Naive thymus-derived CD4-positive, alpha-beta T cell (primary cell): ENCODE measurements at regions of chr1 and their contacts with region 1.

Region 1: GRCh38 chr1:65067491-65068201 is 80.4 kb upstream of the AK4 start:
- DNase-seq: peak; percentile 48 to 75 (median 67)
- ATAC-seq: peak; percentile 39
- H3K4me3 ChIP-seq: peak overlapping the region; percentile 78
- H3K4me3 Mint-ChIP-seq: peak overlapping the region; percentile 85 to 99 (median 97)
- H3K27ac ChIP-seq: peak overlapping the region; percentile 90
- H3K27ac Mint-ChIP-seq: peak overlapping the region; percentile 93 to 100 (median 100)
- H3K4me1 ChIP-seq: peaks cover 16 to 24% of the 10 kb centered on the region in 2 donors
- H3K4me1 Mint-ChIP-seq: peaks cover 43 to 62% (median 55%) of the 10 kb centered on the region in 7 donors
- H3K27me3 ChIP-seq: no peaks in the 10 kb centered on the region
- H3K27me3 Mint-ChIP-seq: no peaks in the 10 kb centered on the region

Region 2: DNA sequence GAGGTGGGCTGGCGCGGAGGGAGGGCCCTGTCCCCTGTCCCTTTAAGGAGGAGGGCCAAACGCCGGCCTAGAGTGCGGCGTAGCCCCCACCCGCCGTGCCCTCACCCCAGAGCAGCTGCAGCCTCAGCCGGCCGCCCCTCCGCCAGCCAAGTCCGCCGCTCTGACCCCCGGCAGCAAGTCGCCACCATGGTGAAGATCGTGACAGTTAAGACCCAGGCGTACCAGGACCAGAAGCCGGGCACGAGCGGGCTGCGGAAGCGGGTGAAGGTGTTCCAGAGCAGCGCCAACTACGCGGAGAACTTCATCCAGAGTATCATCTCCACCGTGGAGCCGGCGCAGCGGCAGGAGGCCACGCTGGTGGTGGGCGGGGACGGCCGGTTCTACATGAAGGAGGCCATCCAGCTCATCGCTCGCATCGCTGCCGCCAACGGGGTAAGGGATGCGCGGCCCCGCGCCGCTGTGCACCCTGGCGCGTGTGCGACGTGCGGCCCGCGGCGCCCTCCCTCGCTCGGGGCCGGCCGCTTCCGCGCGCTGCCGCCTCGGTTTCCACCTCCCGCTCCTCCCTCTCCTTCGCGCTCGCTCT is 1474.3 kb before region 1 on chr1 and contains the start of gene PGM1:
- CTCF ChIA-PET with region 1: no interaction called
- POLR2A ChIA-PET with region 1: no interaction called
- intact Hi-C with region 1: loop called (anchors 5 to 10 kb)
- DNase-seq: peak; percentile 63 to 81 (median 76)
- ATAC-seq: peak; percentile 91
- H3K4me3 ChIP-seq: peak within 1 kb of the TSS; percentile 71
- H3K4me3 Mint-ChIP-seq: peak within 1 kb of the TSS; percentile 96 to 99 (median 98)
- H3K27ac ChIP-seq: peak within 1 kb of the TSS; percentile 90
- H3K27ac Mint-ChIP-seq: peak within 1 kb of the TSS; percentile 95 to 99 (median 99)
- H3K4me1 ChIP-seq: peaks cover 0 to 7% of the 10 kb centered on the region in 2 donors
- H3K4me1 Mint-ChIP-seq: peaks cover 21 to 49% (median 40%) of the 10 kb centered on the region in 7 donors
- H3K27me3 ChIP-seq: no peaks in the 10 kb centered on the region
- H3K27me3 Mint-ChIP-seq: no peaks in the 10 kb centered on the region
- total RNA-seq, gene PGM1: 11.9 to 57.2 (median 16.1) TPM

Region 3: GRCh38 chr1:64877151-64877550 is 190.5 kb before region 1 on chr1:
- CTCF ChIA-PET with region 1: interaction called, 3 read pairs
- POLR2A ChIA-PET with region 1: interaction called, 10 read pairs
- intact Hi-C with region 1: loop called (anchors 1 kb)
- DNase-seq: peak in 7 of 9 donors; percentile 75 to 90 (median 87)
- ATAC-seq: peak; percentile 96
- H3K4me3 ChIP-seq: peak overlapping the region; percentile 8
- H3K4me3 Mint-ChIP-seq: peak overlapping the region; percentile 70 to 83 (median 76)
- H3K27ac ChIP-seq: peak overlapping the region; percentile 36
- H3K27ac Mint-ChIP-seq: peak overlapping the region; percentile 41 to 95 (median 90)
- H3K4me1 ChIP-seq: peaks cover 43 to 53% of the 10 kb centered on the region in 2 donors
- H3K4me1 Mint-ChIP-seq: peaks cover 38 to 88% (median 84%) of the 10 kb centered on the region in 7 donors
- H3K27me3 ChIP-seq: no peaks in the 10 kb centered on the region
- H3K27me3 Mint-ChIP-seq: no peaks in the 10 kb centered on the region

Region 4: DNA sequence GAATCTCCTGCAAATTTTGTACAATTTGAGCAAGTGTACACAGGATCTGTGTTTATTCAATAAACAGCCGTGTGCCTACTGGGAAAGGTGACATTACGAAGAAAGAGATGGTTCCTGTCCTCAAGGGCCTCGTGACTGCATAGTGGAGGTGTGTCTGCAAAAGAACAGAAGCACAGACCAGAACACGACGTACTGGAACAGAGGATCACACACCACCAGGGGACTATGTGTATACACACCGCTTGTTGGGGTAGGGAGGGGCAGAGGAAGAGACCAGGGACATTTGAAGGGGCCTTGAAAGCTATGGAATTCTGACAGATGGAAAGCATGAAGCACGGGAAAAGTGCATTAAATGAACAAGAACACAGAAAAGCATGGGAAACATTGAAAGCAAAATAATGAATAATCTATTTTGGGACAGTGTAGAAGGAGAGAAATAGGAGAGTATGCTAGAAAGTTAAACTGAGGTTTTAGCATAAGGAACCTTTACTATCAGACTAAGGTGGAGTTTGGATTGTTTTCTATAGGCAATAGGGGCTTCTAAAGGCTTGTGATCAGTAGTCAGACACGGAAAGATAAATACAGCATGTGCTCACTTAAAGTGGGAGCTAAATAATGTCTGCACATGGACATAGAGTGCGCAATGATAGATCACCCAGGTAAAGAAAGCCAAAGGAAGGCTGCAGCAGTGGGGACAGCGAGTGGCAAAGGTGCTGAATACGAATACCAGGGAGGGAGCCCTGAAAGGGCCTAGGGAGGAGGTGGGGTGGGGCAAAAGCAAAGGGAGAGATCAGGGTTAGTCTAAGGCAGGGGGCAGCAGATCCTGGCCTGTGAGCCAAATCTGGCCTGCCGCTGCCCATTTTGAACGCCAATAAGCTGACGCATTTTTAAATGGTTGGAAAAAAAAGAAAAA is 112.3 kb before region 1 on chr1:
- CTCF ChIA-PET with region 1: no interaction called
- POLR2A ChIA-PET with region 1: no interaction called
- intact Hi-C with region 1: no loop called
- DNase-seq: peak in 1 of 9 donors; percentile 24
- ATAC-seq: peak; percentile 47
- H3K4me3 ChIP-seq: no peak overlapping the region
- H3K4me3 Mint-ChIP-seq: no peak overlapping the region
- H3K27ac ChIP-seq: no peak overlapping the region
- H3K27ac Mint-ChIP-seq: no peak overlapping the region
- H3K4me1 ChIP-seq: peaks cover 71 to 87% of the 10 kb centered on the region in 2 donors
- H3K4me1 Mint-ChIP-seq: peaks cover 12 to 56% (median 40%) of the 10 kb centered on the region in 7 donors
- H3K27me3 ChIP-seq: no peaks in the 10 kb centered on the region
- H3K27me3 Mint-ChIP-seq: no peaks in the 10 kb centered on the region

Region 5: DNA sequence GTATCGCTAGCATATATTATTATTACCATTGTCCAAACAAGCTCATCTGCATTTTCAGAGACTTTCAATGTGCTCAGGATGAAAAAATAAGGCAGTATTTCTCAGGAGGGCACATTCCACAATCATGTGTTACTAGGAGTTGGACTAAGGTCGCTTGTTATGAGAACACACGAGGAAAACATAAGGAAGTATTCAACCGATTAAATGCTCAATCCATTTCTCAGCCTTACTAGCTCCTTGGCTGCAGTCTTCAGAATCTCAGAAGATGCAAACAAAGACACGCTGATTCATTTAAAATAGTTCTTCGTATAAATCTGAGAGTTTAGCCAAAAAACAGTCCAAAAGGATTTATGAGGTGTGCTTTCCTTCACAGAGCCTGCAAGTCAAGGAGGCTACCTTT is 19.3 kb before region 1 on chr1:
- CTCF ChIA-PET with region 1: interaction called, 9 read pairs
- POLR2A ChIA-PET with region 1: interaction called, 57 read pairs
- intact Hi-C with region 1: no loop called
- DNase-seq: no peak
- ATAC-seq: no peak
- H3K4me3 ChIP-seq: no peak overlapping the region
- H3K4me3 Mint-ChIP-seq: peak overlapping the region in 2 of 10 donors; percentile 12 to 14
- H3K27ac ChIP-seq: no peak overlapping the region
- H3K27ac Mint-ChIP-seq: peak overlapping the region in 6 of 9 donors; percentile 27 to 91 (median 63)
- H3K4me1 ChIP-seq: peaks cover 22 to 36% of the 10 kb centered on the region in 2 donors
- H3K4me1 Mint-ChIP-seq: peaks cover 31 to 77% (median 67%) of the 10 kb centered on the region in 7 donors
- H3K27me3 ChIP-seq: no peaks in the 10 kb centered on the region
- H3K27me3 Mint-ChIP-seq: no peaks in the 10 kb centered on the region

Region 6: DNA sequence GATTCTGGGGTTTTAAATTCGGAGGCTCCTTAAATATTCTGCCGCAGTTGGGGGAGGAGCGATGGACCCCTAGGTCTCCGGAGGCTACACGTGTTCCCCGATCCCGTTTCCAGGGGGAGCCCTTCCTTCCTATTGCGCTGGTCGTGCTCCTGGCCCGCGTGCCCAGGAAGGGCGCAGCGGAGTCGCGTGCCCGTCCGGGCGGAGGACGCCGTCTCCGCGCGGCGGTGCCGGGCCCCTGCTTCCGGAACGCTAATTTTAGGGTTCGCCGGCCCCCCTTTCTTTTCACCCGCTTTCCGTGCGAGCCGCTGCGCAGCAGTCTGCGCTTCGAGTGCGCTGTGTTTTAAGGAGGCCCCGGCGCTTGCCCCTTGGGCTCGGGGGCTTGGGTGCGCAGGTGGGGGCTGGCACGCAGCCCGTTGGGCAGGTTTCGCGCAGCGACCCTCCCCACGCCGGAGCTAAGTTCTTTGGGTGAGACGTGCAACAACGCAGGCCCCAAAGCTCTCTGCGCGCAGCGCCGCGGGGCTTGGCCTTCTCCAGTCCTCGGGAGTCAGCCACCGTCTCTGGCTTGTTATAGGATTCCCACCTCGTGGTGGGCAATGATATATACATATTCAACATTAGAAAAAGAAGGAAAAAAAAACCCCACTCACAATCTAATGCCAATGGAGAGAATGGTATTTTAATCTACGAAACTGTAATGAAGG is 198.2 kb after region 1 on chr1:
- CTCF ChIA-PET with region 1: no interaction called
- POLR2A ChIA-PET with region 1: no interaction called
- intact Hi-C with region 1: loop called in 1 of 2 experiments (anchors 1 kb)
- DNase-seq: peak; percentile 21 to 60 (median 51)
- ATAC-seq: peak; percentile 76
- H3K4me3 ChIP-seq: peak overlapping the region; percentile 55
- H3K4me3 Mint-ChIP-seq: peak overlapping the region; percentile 51 to 89 (median 82)
- H3K27ac ChIP-seq: peak overlapping the region; percentile 24
- H3K27ac Mint-ChIP-seq: peak overlapping the region in 7 of 9 donors; percentile 49 to 79 (median 72)
- H3K4me1 ChIP-seq: peaks cover 11 to 16% of the 10 kb centered on the region in 2 donors
- H3K4me1 Mint-ChIP-seq: peaks cover 13 to 30% (median 19%) of the 10 kb centered on the region in 7 donors
- H3K27me3 ChIP-seq: no peaks in the 10 kb centered on the region
- H3K27me3 Mint-ChIP-seq: peaks cover 13 to 47% (median 24%) of the 10 kb centered on the region in 5 donors

Region 7: DNA sequence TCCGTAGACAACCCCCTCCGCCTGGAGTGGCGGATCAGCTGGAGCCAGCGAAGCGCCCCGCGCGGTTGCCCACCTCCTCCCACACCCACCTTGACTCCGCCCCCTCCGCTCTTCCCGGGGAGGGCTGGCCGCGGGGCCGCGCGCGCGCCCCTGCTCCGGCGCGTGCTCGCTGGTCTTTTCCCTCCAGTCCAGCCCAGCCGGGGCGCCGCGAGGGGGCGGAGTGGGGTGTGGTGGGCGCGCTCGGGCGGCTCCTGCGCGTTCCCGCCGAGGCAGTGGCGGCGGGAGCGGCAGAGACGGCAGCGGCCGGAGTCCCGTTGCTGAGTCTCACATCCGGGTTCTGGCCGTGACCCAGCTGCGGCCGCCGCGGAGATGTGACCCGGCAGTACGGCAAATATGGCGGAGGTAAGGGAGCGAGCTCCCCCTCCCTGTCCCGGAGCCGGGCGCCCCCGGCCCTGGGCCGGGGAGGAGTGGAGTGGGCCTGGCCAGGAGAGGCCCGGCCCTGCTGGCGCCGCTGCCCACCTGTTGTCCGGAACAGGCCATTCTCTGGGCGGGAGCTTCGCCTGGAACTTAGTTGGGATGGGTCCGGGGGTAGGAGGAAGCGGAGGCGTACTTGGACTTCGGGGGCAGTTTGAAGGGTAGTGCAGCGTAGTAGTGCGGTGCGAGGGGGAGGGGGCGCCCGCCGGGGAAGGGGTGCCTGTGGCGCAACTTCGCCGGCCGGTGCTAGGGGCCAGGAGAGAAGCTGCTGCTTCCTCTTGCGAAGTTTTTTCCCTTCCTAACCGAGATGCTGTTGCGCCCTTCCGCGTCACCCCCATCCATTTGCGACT is 1862.6 kb after region 1 on chr1:
- CTCF ChIA-PET with region 1: no interaction called
- POLR2A ChIA-PET with region 1: no interaction called
- intact Hi-C with region 1: loop called (anchors 5 kb)
- DNase-seq: peak; percentile 88 to 97 (median 92)
- ATAC-seq: peak; percentile 88
- H3K4me3 ChIP-seq: peak overlapping the region; percentile 69
- H3K4me3 Mint-ChIP-seq: peak overlapping the region; percentile 85 to 98 (median 92)
- H3K27ac ChIP-seq: peak overlapping the region; percentile 91
- H3K27ac Mint-ChIP-seq: peak overlapping the region; percentile 79 to 95 (median 90)
- H3K4me1 ChIP-seq: peaks cover 45 to 48% of the 10 kb centered on the region in 2 donors
- H3K4me1 Mint-ChIP-seq: peaks cover 38 to 88% (median 70%) of the 10 kb centered on the region in 7 donors
- H3K27me3 ChIP-seq: no peaks in the 10 kb centered on the region
- H3K27me3 Mint-ChIP-seq: no peaks in the 10 kb centered on the region